B cell (primary cell): ENCODE measurements at regions of chr12 and their contacts with region 1.

Region 1: DNA sequence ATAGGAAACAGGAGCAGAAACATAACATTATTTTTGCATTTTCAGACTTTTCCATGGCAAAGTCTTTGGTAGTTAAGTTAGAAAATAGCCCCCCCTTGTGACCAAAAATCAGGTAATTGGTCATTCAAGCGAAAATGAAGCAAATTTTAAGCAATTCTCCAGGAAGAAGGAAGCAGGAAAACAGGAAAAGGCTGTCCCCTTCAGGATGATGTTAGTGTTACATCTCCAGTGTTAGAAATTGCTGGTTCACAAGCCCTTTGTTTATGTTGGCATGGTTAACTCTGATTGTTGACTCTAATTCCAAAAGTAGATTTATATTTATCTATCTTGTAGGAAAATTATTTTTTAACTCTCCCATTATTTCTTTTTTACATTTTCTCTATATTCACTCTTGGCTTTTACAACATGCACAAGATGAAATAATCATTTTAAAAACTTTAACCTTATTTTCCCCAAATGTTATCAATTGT is 18.8 kb upstream of the GAS2L3 start:
- DNase-seq: peak; percentile 28
- ATAC-seq: no peak
- H3K4me3 ChIP-seq: no peak overlapping the region
- H3K4me3 Mint-ChIP-seq: no peak overlapping the region
- H3K27ac ChIP-seq: no peak overlapping the region
- H3K27ac Mint-ChIP-seq: no peak overlapping the region
- H3K4me1 ChIP-seq: no peaks in the 10 kb centered on the region
- H3K4me1 Mint-ChIP-seq: no peaks in the 10 kb centered on the region
- H3K27me3 ChIP-seq: no peaks in the 10 kb centered on the region
- H3K27me3 Mint-ChIP-seq: peaks cover 4% of the 10 kb centered on the region
- CTCF ChIP-seq: peak; percentile 57

Region 2: DNA sequence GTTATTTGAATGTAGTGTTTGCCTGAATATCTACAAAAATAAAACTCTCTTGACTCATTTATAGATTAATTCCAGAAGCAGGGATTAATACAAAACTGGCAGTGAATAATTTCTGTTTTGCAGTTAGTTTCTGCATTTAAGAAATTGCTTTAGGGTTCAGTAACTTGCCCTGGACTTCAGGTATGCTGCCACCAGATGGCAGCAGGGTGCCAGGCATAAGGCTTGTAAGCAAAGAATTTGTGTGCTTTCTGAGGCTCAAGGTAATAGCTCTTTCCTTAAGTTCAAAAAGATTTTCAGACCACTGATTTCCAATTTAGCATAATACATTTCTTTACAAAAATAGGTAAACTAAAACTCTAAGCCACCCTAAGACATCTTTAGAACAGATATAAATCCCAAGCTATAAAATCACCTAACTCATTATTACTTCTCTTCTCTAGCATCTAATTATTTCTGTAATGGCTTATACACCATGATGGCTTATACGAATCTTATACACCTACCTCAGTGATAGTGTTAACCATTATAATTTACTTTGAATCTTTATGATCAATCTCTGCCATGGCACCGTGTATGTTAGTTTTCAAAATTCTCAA is 1511.2 kb before region 1 on chr12:
- CTCF ChIA-PET with region 1: interaction called, 4 read pairs
- POLR2A ChIA-PET with region 1: no interaction called
- intact Hi-C with region 1: loop called (anchors 5 kb)
- DNase-seq: peak; percentile 32
- ATAC-seq: no peak
- H3K4me3 ChIP-seq: no peak overlapping the region
- H3K4me3 Mint-ChIP-seq: no peak overlapping the region
- H3K27ac ChIP-seq: no peak overlapping the region
- H3K27ac Mint-ChIP-seq: no peak overlapping the region
- H3K4me1 ChIP-seq: no peaks in the 10 kb centered on the region
- H3K4me1 Mint-ChIP-seq: no peaks in the 10 kb centered on the region
- H3K27me3 ChIP-seq: peaks cover 0 to 3% (median 0%) of the 10 kb centered on the region in 4 experiments
- H3K27me3 Mint-ChIP-seq: peaks cover 10% of the 10 kb centered on the region
- CTCF ChIP-seq: peak; percentile 82

Region 3: GRCh38 chr12:99810718-99811593 is 743.7 kb before region 1 on chr12:
- CTCF ChIA-PET with region 1: no interaction called
- POLR2A ChIA-PET with region 1: no interaction called
- intact Hi-C with region 1: loop called (anchors 5 kb)
- DNase-seq: no peak
- ATAC-seq: no peak
- H3K4me3 ChIP-seq: no peak overlapping the region
- H3K4me3 Mint-ChIP-seq: no peak overlapping the region
- H3K27ac ChIP-seq: no peak overlapping the region
- H3K27ac Mint-ChIP-seq: no peak overlapping the region
- H3K4me1 ChIP-seq: no peaks in the 10 kb centered on the region
- H3K4me1 Mint-ChIP-seq: no peaks in the 10 kb centered on the region
- H3K27me3 ChIP-seq: no peaks in the 10 kb centered on the region
- H3K27me3 Mint-ChIP-seq: no peaks in the 10 kb centered on the region
- CTCF ChIP-seq: no peak

Region 4: DNA sequence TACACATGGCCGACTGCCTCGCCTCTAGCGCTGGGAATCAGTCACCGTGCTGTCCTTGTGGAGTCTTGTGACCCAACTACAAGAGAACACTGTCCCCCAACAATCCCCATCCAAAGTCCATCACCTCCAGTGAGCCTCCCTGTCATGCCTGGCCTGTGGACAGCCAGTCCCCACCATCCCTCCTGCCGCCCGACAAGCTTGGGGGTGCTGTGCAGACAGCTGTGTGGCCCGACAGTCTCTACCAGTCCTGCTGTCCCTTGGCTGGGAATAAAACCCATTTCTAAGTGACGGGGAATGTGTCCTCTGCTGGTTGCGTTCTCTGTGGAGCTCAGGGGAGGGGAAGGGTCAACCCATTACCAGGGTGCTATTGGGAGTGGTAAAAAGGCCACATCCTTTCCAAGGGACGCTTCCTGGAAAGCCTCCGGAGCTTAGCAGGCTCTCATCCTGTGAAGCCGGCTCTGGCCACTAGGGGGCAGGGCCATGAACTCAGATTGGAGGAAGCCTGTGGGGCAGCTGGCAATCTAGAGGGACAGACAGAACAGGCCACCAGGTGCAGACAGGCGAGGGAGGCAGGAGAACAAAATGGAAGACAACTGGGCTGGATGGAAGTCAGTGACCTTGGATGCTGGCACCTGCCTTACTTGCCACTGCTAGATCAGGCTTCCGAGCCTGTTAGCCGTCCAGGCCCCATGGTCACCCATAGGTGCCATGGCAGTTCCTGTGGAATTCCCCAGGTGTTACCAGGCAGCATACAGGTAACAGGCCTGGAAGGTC is 400.0 kb before region 1 on chr12:
- CTCF ChIA-PET with region 1: no interaction called
- POLR2A ChIA-PET with region 1: no interaction called
- intact Hi-C with region 1: loop called (anchors 10 kb)
- DNase-seq: peak; percentile 69
- ATAC-seq: peak; percentile 61
- H3K4me3 ChIP-seq: no peak overlapping the region
- H3K4me3 Mint-ChIP-seq: no peak overlapping the region
- H3K27ac ChIP-seq: no peak overlapping the region
- H3K27ac Mint-ChIP-seq: no peak overlapping the region
- H3K4me1 ChIP-seq: peaks cover 0 to 3% of the 10 kb centered on the region in 2 donors
- H3K4me1 Mint-ChIP-seq: no peaks in the 10 kb centered on the region
- H3K27me3 ChIP-seq: no peaks in the 10 kb centered on the region
- H3K27me3 Mint-ChIP-seq: no peaks in the 10 kb centered on the region
- CTCF ChIP-seq: peak; percentile 86

Region 5: GRCh38 chr12:100234598-100235304 is 319.9 kb before region 1 on chr12:
- CTCF ChIA-PET with region 1: interaction called, 17 read pairs
- POLR2A ChIA-PET with region 1: no interaction called
- intact Hi-C with region 1: no loop called
- DNase-seq: peak; percentile 34
- ATAC-seq: no peak
- H3K4me3 ChIP-seq: no peak overlapping the region
- H3K4me3 Mint-ChIP-seq: no peak overlapping the region
- H3K27ac ChIP-seq: no peak overlapping the region
- H3K27ac Mint-ChIP-seq: no peak overlapping the region
- H3K4me1 ChIP-seq: no peaks in the 10 kb centered on the region
- H3K4me1 Mint-ChIP-seq: no peaks in the 10 kb centered on the region
- H3K27me3 ChIP-seq: no peaks in the 10 kb centered on the region
- H3K27me3 Mint-ChIP-seq: no peaks in the 10 kb centered on the region
- CTCF ChIP-seq: peak; percentile 72